HEK293T (cell line): ENCODE measurements at regions of chr15 and their contacts with region 1.

Region 1: GRCh38 chr15:89776274-89777072 is at the start of gene MESP2:
- DNase-seq: peak; percentile 94

Region 2: DNA sequence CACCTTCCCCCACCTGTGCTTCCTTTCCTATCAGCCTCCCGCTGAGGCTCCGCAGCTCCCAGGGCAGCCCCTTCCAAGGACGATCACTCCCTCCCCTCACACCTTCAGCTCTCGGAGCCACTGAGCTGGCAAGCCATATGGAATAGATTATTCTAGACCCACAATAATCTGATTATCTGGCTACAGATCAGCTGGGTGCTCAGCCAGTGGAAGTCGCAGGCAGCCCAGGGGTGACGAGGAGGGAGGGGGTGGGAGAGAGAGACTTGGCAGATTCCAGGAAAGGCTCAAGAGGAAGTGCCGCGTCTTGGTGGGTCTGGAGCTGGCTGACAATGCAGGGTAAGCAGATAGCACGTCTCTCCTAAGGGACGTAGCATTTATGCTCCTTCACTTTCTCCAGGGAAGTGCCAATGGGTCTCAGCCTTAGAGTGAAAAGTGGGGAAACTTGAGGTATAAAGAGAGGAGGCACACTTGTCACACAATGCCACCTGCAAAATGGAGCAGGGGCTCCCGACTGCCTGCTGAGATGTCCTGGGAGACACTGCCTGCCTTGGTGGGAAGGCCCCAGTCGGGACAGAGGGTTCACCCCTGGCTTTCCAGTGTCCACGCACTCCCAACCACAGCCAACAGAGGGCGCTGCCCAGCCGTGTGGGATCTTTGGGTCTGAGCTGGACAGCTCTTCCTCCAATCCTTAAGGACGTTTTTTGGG is 16.0 kb before region 1 on chr15:
- CTCF ChIA-PET with region 1: interaction called, 38 read pairs
- POLR2A ChIA-PET with region 1: interaction called, 4 read pairs
- DNase-seq: peak; percentile 93